ENCODE measurements at regions of chr17 and their contacts with region 1.

Region 1: DNA sequence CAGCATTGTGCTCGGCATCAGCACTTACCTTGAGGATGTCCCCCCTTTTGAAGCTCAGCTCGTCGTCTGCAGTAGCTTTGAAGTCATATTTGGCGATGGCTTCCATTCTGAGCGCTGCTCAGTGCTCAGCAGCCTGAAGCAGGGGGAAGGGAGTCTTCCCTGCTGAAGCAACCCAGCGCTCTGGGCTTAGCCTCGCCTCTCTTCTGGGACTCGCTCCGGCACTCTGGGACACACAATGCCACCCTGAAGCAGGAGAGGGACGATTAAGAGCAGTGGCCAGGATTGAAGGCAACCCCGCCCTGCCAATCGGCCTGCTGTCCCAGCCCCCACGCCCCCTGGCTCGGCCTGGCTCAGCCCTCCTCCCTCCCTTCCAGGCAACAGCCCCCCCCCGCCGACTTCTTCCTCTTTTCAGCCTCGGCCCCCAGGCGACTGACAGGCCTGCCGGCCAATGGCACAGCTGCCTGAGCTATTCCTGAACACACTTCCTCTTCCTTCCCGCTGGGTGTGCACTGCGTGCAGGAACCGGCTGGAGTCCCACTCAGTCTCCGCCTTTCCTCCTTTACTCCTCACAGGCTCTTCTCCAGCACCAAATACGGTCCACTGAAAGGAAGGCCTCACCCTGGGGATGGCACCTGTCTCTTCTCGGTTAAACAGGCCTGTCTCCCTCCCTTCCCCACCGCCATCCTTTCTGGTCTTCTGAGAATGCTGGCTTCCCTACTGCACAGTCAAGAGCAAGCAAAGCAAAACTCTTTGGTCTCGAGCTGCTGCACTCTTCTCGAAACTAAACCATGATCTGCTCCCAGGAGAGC is 11.8 kb downstream of the GRB2 start:
- DNase-seq: peak; percentile 91
- ATAC-seq: peak; percentile 91
- H3K4me3 Mint-ChIP-seq: peak overlapping the region; percentile 91
- H3K27ac Mint-ChIP-seq: peak overlapping the region; percentile 71
- H3K4me1 Mint-ChIP-seq: peaks cover 75% of the 10 kb centered on the region
- H3K27me3 Mint-ChIP-seq: no peaks in the 10 kb centered on the region

Region 2: GRCh38 chr17:75345514-75346167 is 48.1 kb before region 1 on chr17:
- CTCF ChIA-PET with region 1: interaction called, 5 read pairs
- POLR2A ChIA-PET with region 1: interaction called, 4 read pairs
- intact Hi-C with region 1: loop called in 1 of 2 experiments (anchors 2 kb)
- DNase-seq: peak; percentile 74
- ATAC-seq: peak; percentile 58
- H3K4me3 Mint-ChIP-seq: peak overlapping the region; percentile 60
- H3K27ac Mint-ChIP-seq: peak overlapping the region; percentile 90
- H3K4me1 Mint-ChIP-seq: peaks cover 97% of the 10 kb centered on the region
- H3K27me3 Mint-ChIP-seq: no peaks in the 10 kb centered on the region

Region 3: DNA sequence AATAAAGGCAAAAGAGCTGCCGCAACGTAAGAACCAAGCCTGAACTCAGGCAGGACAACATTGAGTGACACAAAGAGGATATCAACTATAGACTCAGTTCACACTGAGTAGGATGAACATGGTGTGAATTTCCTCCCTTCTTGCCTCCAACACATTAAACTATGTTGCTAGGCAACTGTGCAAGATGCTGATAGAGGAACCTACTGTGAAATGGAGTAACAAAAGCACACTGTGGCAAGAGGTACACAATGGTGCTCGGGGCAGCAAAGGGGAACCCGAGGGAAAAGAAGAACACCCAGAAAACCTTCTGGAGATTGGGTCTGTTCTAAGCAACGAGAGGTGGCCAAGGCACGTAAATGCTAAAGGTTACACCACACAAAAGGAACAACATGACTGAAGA is 22.4 kb before region 1 on chr17:
- CTCF ChIA-PET with region 1: interaction called, 12 read pairs
- POLR2A ChIA-PET with region 1: interaction called, 6 read pairs
- intact Hi-C with region 1: loop called in 1 of 2 experiments (anchors 2 kb)
- DNase-seq: no peak
- ATAC-seq: peak; percentile 24
- H3K4me3 Mint-ChIP-seq: peak overlapping the region; percentile 56
- H3K27ac Mint-ChIP-seq: peak overlapping the region; percentile 82
- H3K4me1 Mint-ChIP-seq: peaks cover 78% of the 10 kb centered on the region
- H3K27me3 Mint-ChIP-seq: no peaks in the 10 kb centered on the region

Region 4: GRCh38 chr17:75855310-75856081 is 461.8 kb after region 1 on chr17 and contains the start of gene WBP2:
- CTCF ChIA-PET with region 1: no interaction called
- POLR2A ChIA-PET with region 1: no interaction called
- intact Hi-C with region 1: no loop called
- DNase-seq: peak; percentile 99
- ATAC-seq: peak; percentile 95
- H3K4me3 Mint-ChIP-seq: no peak within 1 kb of the TSS
- H3K27ac Mint-ChIP-seq: peak within 1 kb of the TSS; percentile 86
- H3K4me1 Mint-ChIP-seq: peaks cover 37% of the 10 kb centered on the region
- H3K27me3 Mint-ChIP-seq: no peaks in the 10 kb centered on the region
- total RNA-seq, gene WBP2: 68.7 to 74.1 TPM

Measured in activated CD4-positive, alpha-beta T cell treated with anti-CD3 and anti-CD28 coated beads for 36 hours (primary cell).